GM18951 (cell line): ENCODE measurements at regions of chr15 and their contacts with region 1.

Region 1: GRCh38 chr15:27330326-27330725 is 359.3 kb downstream of the GABRG3 start:
- POLR2A ChIP-seq: no peak

Region 2: DNA sequence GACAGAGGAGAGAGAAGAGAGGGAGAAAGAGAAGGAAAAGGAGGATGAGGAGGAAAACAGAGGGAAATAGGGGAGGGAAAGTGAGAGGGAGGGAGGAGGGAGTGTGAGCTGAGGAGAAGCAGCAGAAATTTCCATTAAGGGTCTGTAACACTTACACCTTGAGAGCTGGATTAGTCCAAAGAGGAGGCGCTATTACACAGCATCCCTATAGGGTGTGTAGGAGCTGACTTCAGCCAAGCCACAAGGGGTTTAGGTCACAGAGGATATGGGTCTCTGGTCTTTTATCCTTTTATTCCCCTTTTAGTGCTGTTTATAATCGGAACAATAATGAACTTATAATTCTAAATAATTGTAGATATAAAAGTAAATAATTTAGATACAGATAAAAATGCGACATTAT is 128.9 kb before region 1 on chr15:
- in situ Hi-C with region 1: no loop called
- POLR2A ChIP-seq: no peak

Region 3: DNA sequence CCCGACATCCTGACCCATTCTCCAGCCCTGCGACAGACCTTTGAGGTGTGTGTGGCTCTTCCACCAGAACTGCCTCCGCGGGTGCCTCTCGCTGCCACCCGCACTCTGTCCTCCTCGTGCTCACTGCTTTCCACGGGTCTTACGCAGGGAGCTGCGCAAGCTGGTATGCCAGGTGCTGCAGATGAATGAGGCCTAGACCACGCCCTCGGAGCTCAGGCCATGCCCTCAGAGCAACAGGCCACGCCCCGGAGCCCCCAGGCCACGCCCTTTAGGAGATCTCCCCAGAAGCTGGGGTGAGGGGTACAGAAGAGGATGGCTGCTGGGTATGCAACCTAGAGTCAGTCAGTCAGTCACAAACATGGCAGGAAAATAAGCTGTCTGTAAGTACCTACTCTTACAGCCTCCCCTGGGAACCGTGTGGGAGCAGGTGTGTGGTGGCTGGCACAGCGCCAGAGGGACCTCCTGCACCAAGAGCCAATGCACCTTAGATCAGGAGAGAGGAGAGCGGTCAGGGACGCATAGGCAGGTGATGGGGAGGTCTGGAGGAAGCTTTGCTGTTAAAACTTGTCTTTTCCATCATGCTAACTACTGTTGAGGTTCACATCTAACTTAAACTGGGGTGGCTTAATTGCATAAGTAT is 58.9 kb before region 1 on chr15:
- in situ Hi-C with region 1: loop called (anchors 5 kb)
- POLR2A ChIP-seq: no peak

Region 4: GRCh38 chr15:29208352-29208751 is 1878.0 kb after region 1 on chr15:
- in situ Hi-C with region 1: no loop called
- POLR2A ChIP-seq: no peak